ENCODE measurements at regions of chr6 and their contacts with region 1.

Region 1: DNA sequence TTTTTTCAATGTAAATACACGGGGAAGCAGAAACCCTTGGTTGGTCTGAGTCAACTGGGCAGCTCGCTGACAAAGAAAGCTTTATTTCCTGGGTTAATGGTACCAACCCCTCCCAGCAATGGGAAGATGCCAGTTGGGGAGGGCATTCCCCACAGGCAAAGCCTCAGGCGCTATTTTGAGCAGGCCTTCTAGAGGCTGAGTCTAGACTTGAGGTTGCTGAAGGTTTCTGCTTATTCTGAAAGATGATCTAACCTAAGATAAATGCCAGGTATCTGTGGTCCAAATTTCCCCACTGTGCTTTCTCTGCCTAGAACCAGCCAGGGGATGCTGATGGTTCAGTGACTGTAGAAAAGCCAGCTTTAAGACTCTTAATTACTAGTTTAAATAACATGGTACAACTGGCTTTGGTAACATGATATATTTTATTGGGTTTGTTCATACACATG is 172.5 kb upstream of the JARID2 start:
- DNase-seq: no peak
- ATAC-seq: no peak
- H3K4me3 ChIP-seq: no peak overlapping the region
- H3K4me3 Mint-ChIP-seq: no peak overlapping the region
- H3K27ac ChIP-seq: no peak overlapping the region
- H3K27ac Mint-ChIP-seq: no peak overlapping the region
- H3K4me1 ChIP-seq: no peaks in the 10 kb centered on the region
- H3K4me1 Mint-ChIP-seq: no peaks in the 10 kb centered on the region
- H3K27me3 ChIP-seq: no peaks in the 10 kb centered on the region
- H3K27me3 Mint-ChIP-seq: peaks cover 8% of the 10 kb centered on the region
- CTCF ChIP-seq: no peak

Region 2: DNA sequence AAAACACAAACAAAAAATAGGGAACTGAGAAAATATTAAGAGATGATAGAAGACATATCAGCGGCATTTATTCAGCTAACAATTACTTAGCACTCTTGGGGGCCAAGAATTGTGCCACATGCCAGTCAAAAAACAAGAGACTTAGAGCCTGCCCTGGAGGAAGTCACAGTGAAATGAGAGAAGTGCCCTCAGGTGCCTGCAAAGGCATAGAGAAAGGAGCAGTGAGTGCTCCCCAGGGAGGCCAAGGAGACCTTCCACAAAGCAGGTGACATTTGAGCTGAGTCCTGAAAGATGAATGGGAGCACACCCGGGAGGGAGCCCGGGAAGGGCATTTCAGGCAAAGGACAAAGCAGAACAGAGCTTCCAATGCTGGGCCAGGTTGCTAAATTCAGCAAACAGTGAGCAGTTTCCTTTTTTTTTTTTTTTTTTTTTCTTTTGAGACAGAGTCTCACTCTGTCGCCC is 12.2 kb before region 1 on chr6:
- CTCF ChIA-PET with region 1: no interaction called
- POLR2A ChIA-PET with region 1: interaction called, 10 read pairs
- intact Hi-C with region 1: no loop called
- DNase-seq: peak; percentile 35
- ATAC-seq: peak; percentile 43
- H3K4me3 ChIP-seq: no peak overlapping the region
- H3K4me3 Mint-ChIP-seq: no peak overlapping the region
- H3K27ac ChIP-seq: no peak overlapping the region
- H3K27ac Mint-ChIP-seq: peak overlapping the region; percentile 44
- H3K4me1 ChIP-seq: peaks cover 3 to 18% of the 10 kb centered on the region in 2 donors
- H3K4me1 Mint-ChIP-seq: peaks cover 15% of the 10 kb centered on the region
- H3K27me3 ChIP-seq: no peaks in the 10 kb centered on the region
- H3K27me3 Mint-ChIP-seq: no peaks in the 10 kb centered on the region
- CTCF ChIP-seq: no peak

Region 3: DNA sequence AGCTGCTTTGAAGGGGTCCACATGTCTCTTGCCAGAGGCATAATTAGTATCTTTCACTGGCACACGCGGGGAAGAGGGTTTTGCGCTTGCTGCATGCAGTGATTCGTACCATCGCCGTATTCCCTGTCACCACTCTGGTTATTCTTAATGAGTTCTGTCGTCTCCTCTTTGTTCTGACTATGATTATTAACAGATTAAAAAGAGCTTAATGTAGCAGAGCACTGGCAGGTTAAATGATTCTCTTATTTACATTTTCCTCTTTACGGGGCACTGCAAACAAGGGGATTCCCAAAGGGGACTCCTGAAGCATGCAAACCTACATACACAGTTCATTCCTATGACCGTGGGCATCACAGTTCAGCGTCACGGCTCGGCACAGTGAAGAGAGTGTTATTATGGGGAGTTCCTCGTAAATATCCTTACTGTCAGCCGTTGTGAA is 384.7 kb after region 1 on chr6:
- CTCF ChIA-PET with region 1: no interaction called
- POLR2A ChIA-PET with region 1: no interaction called
- intact Hi-C with region 1: no loop called
- DNase-seq: peak; percentile 79
- ATAC-seq: peak; percentile 91
- H3K4me3 ChIP-seq: peak overlapping the region in 2 of 5 experiments; percentile 2 to 20
- H3K4me3 Mint-ChIP-seq: peak overlapping the region; percentile 71
- H3K27ac ChIP-seq: peak overlapping the region; percentile 30 to 70
- H3K27ac Mint-ChIP-seq: peak overlapping the region; percentile 78
- H3K4me1 ChIP-seq: peaks cover 29 to 40% of the 10 kb centered on the region in 2 donors
- H3K4me1 Mint-ChIP-seq: peaks cover 73% of the 10 kb centered on the region
- H3K27me3 ChIP-seq: no peaks in the 10 kb centered on the region
- H3K27me3 Mint-ChIP-seq: no peaks in the 10 kb centered on the region
- CTCF ChIP-seq: no peak